ENCODE measurements at regions of chr10 and their contacts with region 1.

Region 1: GRCh38 chr10:100872034-100872791 is 40.5 kb upstream of the SLF2 start:
- DNase-seq: peak; percentile 78
- ATAC-seq: peak; percentile 87
- H3K4me3 Mint-ChIP-seq: no peak overlapping the region
- H3K27ac Mint-ChIP-seq: no peak overlapping the region
- H3K4me1 Mint-ChIP-seq: no peaks in the 10 kb centered on the region
- H3K27me3 Mint-ChIP-seq: peaks cover 8% of the 10 kb centered on the region
- CTCF ChIP-seq: peak; percentile 69

Region 2: GRCh38 chr10:100562008-100562711 is 310.1 kb before region 1 on chr10:
- CTCF ChIA-PET with region 1: interaction called, 40 read pairs
- POLR2A ChIA-PET with region 1: no interaction called
- intact Hi-C with region 1: loop called (anchors 5 kb)
- DNase-seq: peak; percentile 83
- ATAC-seq: peak; percentile 97
- H3K4me3 Mint-ChIP-seq: no peak overlapping the region
- H3K27ac Mint-ChIP-seq: no peak overlapping the region
- H3K4me1 Mint-ChIP-seq: peaks cover 9% of the 10 kb centered on the region
- H3K27me3 Mint-ChIP-seq: peaks cover 35% of the 10 kb centered on the region
- CTCF ChIP-seq: peak; percentile 99

Region 3: GRCh38 chr10:100621360-100622205 is 250.6 kb before region 1 on chr10:
- CTCF ChIA-PET with region 1: no interaction called
- POLR2A ChIA-PET with region 1: no interaction called
- intact Hi-C with region 1: no loop called
- DNase-seq: peak; percentile 59
- ATAC-seq: peak; percentile 34
- H3K4me3 Mint-ChIP-seq: peak overlapping the region; percentile 38
- H3K27ac Mint-ChIP-seq: no peak overlapping the region
- H3K4me1 Mint-ChIP-seq: no peaks in the 10 kb centered on the region
- H3K27me3 Mint-ChIP-seq: peaks cover 51% of the 10 kb centered on the region
- CTCF ChIP-seq: no peak

Region 4: GRCh38 chr10:100670828-100671479 is 201.3 kb before region 1 on chr10:
- CTCF ChIA-PET with region 1: interaction called, 4 read pairs
- POLR2A ChIA-PET with region 1: no interaction called
- intact Hi-C with region 1: loop called (anchors 5 kb)
- DNase-seq: peak; percentile 67
- ATAC-seq: peak; percentile 94
- H3K4me3 Mint-ChIP-seq: no peak overlapping the region
- H3K27ac Mint-ChIP-seq: no peak overlapping the region
- H3K4me1 Mint-ChIP-seq: no peaks in the 10 kb centered on the region
- H3K27me3 Mint-ChIP-seq: peaks cover 59% of the 10 kb centered on the region
- CTCF ChIP-seq: peak; percentile 99

Region 5: GRCh38 chr10:100749309-100750217 is 122.7 kb before region 1 on chr10:
- CTCF ChIA-PET with region 1: no interaction called
- POLR2A ChIA-PET with region 1: no interaction called
- intact Hi-C with region 1: loop called (anchors 5 kb)
- DNase-seq: no peak
- ATAC-seq: no peak
- H3K4me3 Mint-ChIP-seq: no peak overlapping the region
- H3K27ac Mint-ChIP-seq: no peak overlapping the region
- H3K4me1 Mint-ChIP-seq: peaks cover 26% of the 10 kb centered on the region
- H3K27me3 Mint-ChIP-seq: peaks cover 74% of the 10 kb centered on the region
- CTCF ChIP-seq: no peak

Region 6: DNA sequence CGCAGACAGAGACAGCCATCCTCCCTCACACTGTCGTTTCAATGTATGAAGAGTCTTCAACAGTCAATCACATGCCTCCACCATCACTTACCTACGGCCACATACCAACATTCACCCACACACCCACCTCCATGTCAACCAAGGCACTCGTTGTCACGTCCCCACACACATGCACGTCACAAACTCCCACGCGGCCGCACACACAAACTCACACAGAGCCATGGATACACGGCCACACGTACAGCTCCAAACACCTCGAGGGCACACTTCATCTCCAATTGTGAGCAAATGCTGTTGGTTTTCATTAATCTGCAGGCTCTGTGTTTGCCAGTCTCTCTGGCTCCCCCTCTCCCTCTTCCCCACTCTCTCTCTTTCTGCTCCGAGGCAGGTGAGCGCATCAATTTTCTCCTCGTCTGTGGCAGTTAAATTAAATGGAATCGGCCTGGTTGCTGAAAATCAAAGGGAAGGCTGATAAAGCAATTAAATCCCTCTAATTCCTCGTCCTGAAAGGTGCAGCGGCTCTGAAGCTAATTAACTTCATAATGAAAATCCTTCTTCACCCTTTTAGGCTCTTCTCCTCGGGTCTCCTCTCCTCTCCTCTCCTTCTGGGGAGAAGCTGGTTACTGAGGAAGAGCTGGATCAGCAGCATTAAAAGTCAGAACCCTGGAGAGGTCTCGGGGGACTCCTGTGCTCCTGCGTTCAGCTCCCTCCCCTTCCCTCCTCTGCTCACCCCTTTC is 13.3 kb before region 1 on chr10:
- CTCF ChIA-PET with region 1: interaction called, 17 read pairs
- POLR2A ChIA-PET with region 1: no interaction called
- intact Hi-C with region 1: no loop called
- DNase-seq: no peak
- ATAC-seq: no peak
- H3K4me3 Mint-ChIP-seq: no peak overlapping the region
- H3K27ac Mint-ChIP-seq: no peak overlapping the region
- H3K4me1 Mint-ChIP-seq: no peaks in the 10 kb centered on the region
- H3K27me3 Mint-ChIP-seq: peaks cover 38% of the 10 kb centered on the region
- CTCF ChIP-seq: no peak

Measured in activated CD8-positive, alpha-beta T cell treated with anti-CD3 and anti-CD28 coated beads for 36 hours (primary cell).